Activated CD8-positive, alpha-beta T cell treated with anti-CD3 and anti-CD28 coated beads for 36 hours (primary cell): ENCODE measurements at regions of chr10 and their contacts with region 1.

Region 1: GRCh38 chr10:70461215-70461986 is 17.2 kb upstream of the PALD1 start:
- DNase-seq: peak; percentile 69
- ATAC-seq: peak; percentile 75
- H3K4me3 Mint-ChIP-seq: no peak overlapping the region
- H3K27ac Mint-ChIP-seq: no peak overlapping the region
- H3K4me1 Mint-ChIP-seq: peaks cover 4% of the 10 kb centered on the region
- H3K27me3 Mint-ChIP-seq: peaks cover 35% of the 10 kb centered on the region
- CTCF ChIP-seq: peak; percentile 85

Region 2: DNA sequence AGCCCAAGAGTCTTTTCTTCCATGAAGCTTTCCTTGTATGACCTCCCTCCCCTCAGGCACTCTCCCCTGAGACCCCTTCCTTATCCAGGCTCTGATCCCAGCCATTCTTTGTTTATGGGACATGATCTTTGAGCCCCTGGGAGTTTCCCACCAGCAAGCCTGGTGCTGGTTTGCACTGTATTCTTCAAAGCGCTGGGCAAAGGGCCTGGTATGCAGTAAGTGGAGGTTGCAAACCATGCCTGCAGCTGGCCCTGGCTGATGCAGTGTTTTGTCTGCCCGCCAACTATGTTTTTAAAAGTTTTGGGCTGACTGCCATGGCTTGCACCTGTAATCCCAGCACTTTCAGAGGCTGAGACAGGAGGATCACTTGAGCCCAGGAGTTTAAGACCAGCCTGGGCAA is 13.2 kb before region 1 on chr10:
- CTCF ChIA-PET with region 1: interaction called, 18 read pairs
- POLR2A ChIA-PET with region 1: no interaction called
- intact Hi-C with region 1: no loop called
- DNase-seq: no peak
- ATAC-seq: no peak
- H3K4me3 Mint-ChIP-seq: no peak overlapping the region
- H3K27ac Mint-ChIP-seq: no peak overlapping the region
- H3K4me1 Mint-ChIP-seq: no peaks in the 10 kb centered on the region
- H3K27me3 Mint-ChIP-seq: peaks cover 11% of the 10 kb centered on the region
- CTCF ChIP-seq: no peak

Region 3: DNA sequence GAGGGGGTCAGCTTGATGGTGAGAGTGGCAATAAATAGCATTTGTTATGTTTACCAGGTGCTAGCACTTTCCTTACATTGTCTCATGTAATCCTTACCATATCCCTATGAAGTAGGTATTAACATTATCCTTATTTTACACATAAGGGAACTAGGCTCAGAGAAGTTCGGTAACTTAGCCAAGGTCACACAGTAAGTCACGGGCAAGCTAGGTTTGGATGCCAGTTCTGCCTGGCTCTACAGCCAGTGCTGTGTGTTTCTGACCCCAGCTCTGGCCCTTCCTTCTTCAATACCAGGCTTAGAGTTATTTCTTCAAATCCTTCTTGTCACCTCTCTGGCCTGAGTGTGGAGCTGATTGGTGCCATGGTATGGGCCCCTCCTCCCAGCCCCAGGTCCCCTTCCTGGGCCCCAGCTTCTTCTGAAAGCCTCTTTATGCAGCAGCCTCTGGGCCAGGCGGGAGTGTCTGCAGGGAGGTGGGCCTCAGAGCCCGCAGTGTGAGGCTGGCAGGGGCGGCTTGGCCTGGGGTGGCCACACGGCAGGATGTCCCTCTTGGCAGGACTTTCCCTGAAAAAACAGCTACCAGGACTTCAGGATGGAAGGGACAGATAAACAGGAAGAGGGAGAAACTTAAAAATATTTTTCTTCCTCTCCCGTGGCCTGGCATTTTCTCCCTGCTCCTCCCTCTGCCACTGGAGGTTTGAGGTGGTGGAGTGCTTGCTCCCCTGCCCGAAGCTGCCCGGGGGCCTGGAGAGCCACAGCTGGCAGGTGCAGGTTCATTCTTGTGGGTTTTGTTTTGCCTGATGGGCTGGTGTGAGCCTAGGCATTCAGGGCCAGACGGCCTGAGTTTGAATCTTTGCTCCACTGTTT is 37.8 kb after region 1 on chr10:
- CTCF ChIA-PET with region 1: interaction called, 10 read pairs
- POLR2A ChIA-PET with region 1: no interaction called
- intact Hi-C with region 1: no loop called
- DNase-seq: no peak
- ATAC-seq: no peak
- H3K4me3 Mint-ChIP-seq: no peak overlapping the region
- H3K27ac Mint-ChIP-seq: no peak overlapping the region
- H3K4me1 Mint-ChIP-seq: peaks cover 18% of the 10 kb centered on the region
- H3K27me3 Mint-ChIP-seq: peaks cover 3% of the 10 kb centered on the region
- CTCF ChIP-seq: no peak

Region 4: DNA sequence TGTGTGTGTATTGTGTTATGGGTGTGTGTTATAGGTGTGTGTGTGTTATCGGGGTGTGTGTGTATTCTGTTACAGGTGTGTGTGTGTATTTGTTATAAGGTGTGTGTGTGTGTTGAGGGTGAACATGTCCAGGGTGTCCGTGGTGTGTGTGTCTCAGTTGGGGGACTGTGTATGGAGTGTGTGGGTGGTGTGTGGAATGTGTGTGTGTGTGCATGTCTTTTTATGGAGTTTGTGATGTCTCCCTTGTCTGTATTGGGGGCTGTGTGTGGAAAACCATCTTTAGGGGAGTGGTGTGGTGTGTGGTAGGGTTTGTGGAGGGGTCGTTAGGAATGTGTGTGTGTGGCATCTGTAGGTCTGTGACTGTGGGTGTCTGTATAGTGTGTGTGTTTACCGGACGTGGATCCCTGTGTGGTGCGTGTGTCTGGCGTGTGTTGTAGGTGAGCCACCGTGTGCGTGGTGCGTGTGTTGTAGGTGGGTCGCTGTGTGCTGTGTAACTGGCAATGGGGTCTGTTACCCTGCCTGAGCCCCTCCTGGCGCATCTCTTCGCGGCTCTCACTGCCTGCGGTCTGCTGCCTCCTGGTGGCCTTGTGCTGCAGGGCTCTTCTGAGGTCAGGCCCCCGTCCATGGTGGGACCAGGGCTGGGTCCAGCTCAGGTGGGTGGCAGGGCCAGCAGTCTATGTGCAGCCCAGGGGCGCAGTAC is 78.8 kb after region 1 on chr10:
- CTCF ChIA-PET with region 1: interaction called, 23 read pairs
- POLR2A ChIA-PET with region 1: no interaction called
- intact Hi-C with region 1: loop called (anchors 5 kb)
- DNase-seq: peak; percentile 48
- ATAC-seq: peak; percentile 55
- H3K4me3 Mint-ChIP-seq: no peak overlapping the region
- H3K27ac Mint-ChIP-seq: no peak overlapping the region
- H3K4me1 Mint-ChIP-seq: no peaks in the 10 kb centered on the region
- H3K27me3 Mint-ChIP-seq: no peaks in the 10 kb centered on the region
- CTCF ChIP-seq: peak; percentile 66

Region 5: GRCh38 chr10:70575874-70576802 is 114.7 kb after region 1 on chr10:
- CTCF ChIA-PET with region 1: no interaction called
- POLR2A ChIA-PET with region 1: no interaction called
- intact Hi-C with region 1: no loop called
- DNase-seq: peak; percentile 60
- ATAC-seq: peak; percentile 19
- H3K4me3 Mint-ChIP-seq: peak overlapping the region; percentile 10
- H3K27ac Mint-ChIP-seq: peak overlapping the region; percentile 83
- H3K4me1 Mint-ChIP-seq: peaks cover 48% of the 10 kb centered on the region
- H3K27me3 Mint-ChIP-seq: no peaks in the 10 kb centered on the region
- CTCF ChIP-seq: no peak